MCF 10A (cell line): ENCODE measurements at regions of chr1 and their contacts with region 1.

Region 1: GRCh38 chr1:237799762-237800474 is 90.8 kb downstream of the ZP4 start:
- DNase-seq: peak; percentile 96
- H3K4me3 Mint-ChIP-seq: no peak overlapping the region
- H3K27ac Mint-ChIP-seq: no peak overlapping the region
- H3K4me1 Mint-ChIP-seq: no peaks in the 10 kb centered on the region
- H3K27me3 Mint-ChIP-seq: no peaks in the 10 kb centered on the region
- CTCF ChIP-seq: peak; percentile 76

Region 2: DNA sequence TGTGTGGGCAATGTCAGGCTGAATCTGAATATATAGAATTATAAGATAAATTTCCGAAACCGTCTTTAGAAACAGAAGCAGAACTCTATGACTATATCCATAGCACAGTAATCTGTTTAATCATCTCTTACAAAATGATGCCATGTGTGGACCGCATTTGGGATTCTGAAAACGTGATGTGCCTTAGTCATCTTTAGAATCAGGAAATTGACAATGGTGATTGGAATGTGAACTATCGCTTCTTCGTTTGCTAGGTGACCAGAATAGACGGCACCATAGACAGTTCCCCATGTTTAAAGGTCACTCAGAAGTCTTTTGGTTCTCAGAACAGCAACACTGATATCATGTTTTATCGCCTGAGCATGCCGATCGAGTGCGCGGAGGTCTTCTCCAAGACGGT is 209.5 kb before region 1 on chr1:
- CTCF ChIA-PET with region 1: interaction called, 4 read pairs
- POLR2A ChIA-PET with region 1: no interaction called
- intact Hi-C with region 1: loop called (anchors 10 kb)
- DNase-seq: peak; percentile 51
- H3K4me3 Mint-ChIP-seq: no peak overlapping the region
- H3K27ac Mint-ChIP-seq: no peak overlapping the region
- H3K4me1 Mint-ChIP-seq: no peaks in the 10 kb centered on the region
- H3K27me3 Mint-ChIP-seq: no peaks in the 10 kb centered on the region
- CTCF ChIP-seq: no peak

Region 3: DNA sequence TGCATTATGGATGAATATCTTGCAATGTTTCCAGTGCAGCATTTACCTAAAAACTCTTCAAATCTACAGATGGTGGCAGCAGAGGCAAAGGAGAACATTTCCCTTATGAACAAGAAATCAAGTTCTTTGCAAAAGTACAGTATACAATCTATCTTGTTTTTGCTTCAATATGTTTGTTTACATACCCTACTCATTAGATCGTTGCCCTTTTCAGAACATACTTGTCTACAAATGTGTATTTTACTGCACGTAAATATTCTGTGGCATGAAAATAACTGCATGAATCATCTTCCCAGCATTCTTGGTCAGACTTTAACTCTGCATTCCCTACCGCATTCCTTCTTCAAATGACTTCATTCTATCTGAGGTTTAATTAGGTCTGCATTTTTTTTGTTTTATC is 121.9 kb before region 1 on chr1:
- CTCF ChIA-PET with region 1: interaction called, 466 read pairs
- POLR2A ChIA-PET with region 1: interaction called, 6 read pairs
- intact Hi-C with region 1: loop called (anchors 1 kb)
- DNase-seq: peak; percentile 59
- H3K4me3 Mint-ChIP-seq: peak overlapping the region; percentile 59
- H3K27ac Mint-ChIP-seq: no peak overlapping the region
- H3K4me1 Mint-ChIP-seq: peaks cover 11% of the 10 kb centered on the region
- H3K27me3 Mint-ChIP-seq: no peaks in the 10 kb centered on the region
- CTCF ChIP-seq: peak; percentile 65

Region 4: GRCh38 chr1:237751090-237751489 is 48.8 kb before region 1 on chr1:
- CTCF ChIA-PET with region 1: interaction called, 12 read pairs
- POLR2A ChIA-PET with region 1: no interaction called
- intact Hi-C with region 1: no loop called
- DNase-seq: no peak
- H3K4me3 Mint-ChIP-seq: no peak overlapping the region
- H3K27ac Mint-ChIP-seq: no peak overlapping the region
- H3K4me1 Mint-ChIP-seq: no peaks in the 10 kb centered on the region
- H3K27me3 Mint-ChIP-seq: no peaks in the 10 kb centered on the region
- CTCF ChIP-seq: no peak

Region 5: GRCh38 chr1:237779366-237779765 is 20.6 kb before region 1 on chr1:
- CTCF ChIA-PET with region 1: interaction called, 19 read pairs
- POLR2A ChIA-PET with region 1: interaction called, 3 read pairs
- intact Hi-C with region 1: no loop called
- DNase-seq: no peak
- H3K4me3 Mint-ChIP-seq: no peak overlapping the region
- H3K27ac Mint-ChIP-seq: no peak overlapping the region
- H3K4me1 Mint-ChIP-seq: peaks cover 4% of the 10 kb centered on the region
- H3K27me3 Mint-ChIP-seq: no peaks in the 10 kb centered on the region
- CTCF ChIP-seq: no peak

Region 6: DNA sequence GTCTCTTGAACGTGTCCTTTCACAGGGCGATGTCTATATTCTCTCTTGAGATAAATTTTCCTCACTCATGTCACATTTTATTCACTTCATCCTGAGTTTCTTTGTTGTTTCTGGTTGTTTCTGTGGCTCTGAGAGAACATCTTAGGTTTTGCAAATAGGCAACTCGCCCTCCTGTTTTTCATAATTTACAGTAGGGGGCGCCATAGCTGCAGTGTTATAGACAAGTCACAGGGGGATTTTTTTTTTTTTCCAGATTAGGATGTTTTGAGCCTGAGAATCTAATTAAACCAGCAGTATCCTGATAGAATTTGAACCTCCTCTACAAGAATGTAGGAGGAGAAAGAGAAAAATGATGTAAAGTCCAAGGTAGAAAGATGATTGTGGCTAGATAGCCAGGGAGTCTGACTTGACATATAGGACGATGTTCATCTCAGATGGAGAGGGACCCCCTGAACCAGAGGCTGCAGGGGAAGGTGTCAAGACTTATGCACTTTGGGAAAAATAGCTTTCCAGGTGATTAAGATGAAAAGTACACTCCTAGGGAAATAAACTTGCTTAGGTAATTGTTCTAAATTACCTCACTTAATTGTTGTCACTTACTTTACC is 14.5 kb after region 1 on chr1:
- CTCF ChIA-PET with region 1: interaction called, 110 read pairs
- POLR2A ChIA-PET with region 1: interaction called, 3 read pairs
- intact Hi-C with region 1: no loop called
- DNase-seq: peak; percentile 53
- H3K4me3 Mint-ChIP-seq: no peak overlapping the region
- H3K27ac Mint-ChIP-seq: no peak overlapping the region
- H3K4me1 Mint-ChIP-seq: no peaks in the 10 kb centered on the region
- H3K27me3 Mint-ChIP-seq: no peaks in the 10 kb centered on the region
- CTCF ChIP-seq: peak; percentile 72